MCF 10A (cell line): ENCODE measurements at regions of chr1 and their contacts with region 1.

Region 1: DNA sequence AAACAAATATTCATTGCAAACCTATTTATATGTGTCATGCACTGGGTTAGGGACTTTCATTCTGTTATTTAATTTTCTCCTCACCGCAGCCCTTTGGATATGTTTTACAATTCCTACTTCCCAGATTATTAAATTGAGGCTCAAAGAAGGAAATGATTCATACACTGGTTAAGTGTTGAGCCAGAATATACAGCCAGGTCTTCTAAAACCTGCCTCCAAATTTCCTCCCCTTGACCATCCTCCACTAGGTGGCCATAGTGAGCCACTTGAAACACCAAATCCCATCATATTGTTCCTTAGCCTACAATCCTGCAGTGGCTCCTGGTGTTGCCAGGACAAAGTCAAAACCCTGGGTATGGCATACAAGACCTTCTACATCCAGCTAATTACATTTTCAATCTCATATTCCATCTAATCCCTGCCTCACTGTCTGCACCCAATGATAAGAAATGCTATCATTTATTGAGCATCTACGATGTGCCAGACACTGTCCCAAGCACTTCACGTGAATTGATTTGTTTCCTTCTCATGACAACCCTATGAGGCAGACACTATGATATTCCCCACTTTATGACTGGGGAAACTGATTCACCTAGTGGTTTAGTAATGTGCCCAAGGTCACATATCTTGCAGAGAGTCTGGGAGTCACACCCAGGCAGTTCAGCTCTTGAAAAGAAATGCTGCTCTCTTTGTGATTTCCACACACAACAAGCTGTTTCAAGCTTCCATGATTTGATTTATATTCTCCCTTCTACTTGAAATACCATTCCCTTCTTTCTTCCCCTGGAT is 23.6 kb upstream of the KIRREL1 start:
- DNase-seq: peak; percentile 95
- H3K4me3 Mint-ChIP-seq: peak overlapping the region; percentile 55
- H3K27ac Mint-ChIP-seq: peak overlapping the region; percentile 49
- H3K4me1 Mint-ChIP-seq: peaks cover 28% of the 10 kb centered on the region
- H3K27me3 Mint-ChIP-seq: no peaks in the 10 kb centered on the region
- CTCF ChIP-seq: peak; percentile 94

Region 2: GRCh38 chr1:157798211-157798610 is 171.7 kb before region 1 on chr1:
- CTCF ChIA-PET with region 1: no interaction called
- POLR2A ChIA-PET with region 1: no interaction called
- intact Hi-C with region 1: no loop called
- DNase-seq: peak; percentile 56
- H3K4me3 Mint-ChIP-seq: no peak overlapping the region
- H3K27ac Mint-ChIP-seq: no peak overlapping the region
- H3K4me1 Mint-ChIP-seq: peaks cover 5% of the 10 kb centered on the region
- H3K27me3 Mint-ChIP-seq: peaks cover 51% of the 10 kb centered on the region
- CTCF ChIP-seq: no peak

Region 3: DNA sequence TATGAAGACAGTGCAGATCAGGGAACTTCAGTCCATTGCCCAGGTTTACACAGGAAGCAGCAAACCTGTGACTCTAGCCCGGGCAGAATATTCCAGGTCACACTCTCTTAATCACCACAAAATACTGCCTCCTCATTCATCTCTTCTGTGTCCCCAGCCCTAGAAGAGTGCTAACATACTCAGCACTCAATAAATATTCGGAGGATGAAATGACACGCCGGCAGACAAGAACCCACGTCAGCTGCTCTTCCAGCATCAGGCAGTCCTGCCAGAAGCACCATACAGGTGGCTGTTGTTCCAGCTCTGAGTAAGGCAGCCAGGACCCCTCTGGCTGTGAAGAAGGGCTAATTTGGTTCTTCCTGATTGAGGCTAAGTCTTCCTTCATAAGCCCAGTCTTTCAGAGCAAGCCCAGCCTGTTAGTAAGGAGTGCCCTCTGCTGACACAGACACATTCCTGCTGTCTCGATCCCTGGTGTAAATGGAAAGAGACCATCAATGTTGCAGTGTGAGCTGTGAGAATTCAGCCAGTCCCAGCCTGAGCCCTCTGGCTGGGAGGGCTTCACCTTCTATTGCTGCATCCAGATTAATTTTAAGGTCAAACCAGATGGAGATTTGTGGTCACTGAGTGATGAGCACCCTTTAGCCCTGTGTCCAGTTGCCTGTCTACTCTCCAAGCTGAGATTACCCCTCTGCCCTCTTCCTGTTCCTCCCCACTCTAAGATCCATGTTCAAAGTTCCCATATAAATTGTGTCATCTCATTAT is 21.4 kb before region 1 on chr1:
- CTCF ChIA-PET with region 1: interaction called, 12 read pairs
- POLR2A ChIA-PET with region 1: no interaction called
- intact Hi-C with region 1: no loop called
- DNase-seq: peak; percentile 65
- H3K4me3 Mint-ChIP-seq: no peak overlapping the region
- H3K27ac Mint-ChIP-seq: no peak overlapping the region
- H3K4me1 Mint-ChIP-seq: no peaks in the 10 kb centered on the region
- H3K27me3 Mint-ChIP-seq: peaks cover 84% of the 10 kb centered on the region
- CTCF ChIP-seq: peak; percentile 88

Region 4: GRCh38 chr1:158028969-158029368 is 59.1 kb after region 1 on chr1:
- CTCF ChIA-PET with region 1: interaction called, 56 read pairs
- POLR2A ChIA-PET with region 1: interaction called, 11 read pairs
- intact Hi-C with region 1: no loop called
- DNase-seq: peak; percentile 72
- H3K4me3 Mint-ChIP-seq: no peak overlapping the region
- H3K27ac Mint-ChIP-seq: peak overlapping the region; percentile 63
- H3K4me1 Mint-ChIP-seq: peaks cover 42% of the 10 kb centered on the region
- H3K27me3 Mint-ChIP-seq: no peaks in the 10 kb centered on the region
- CTCF ChIP-seq: no peak

Region 5: GRCh38 chr1:158075078-158075477 is 105.2 kb after region 1 on chr1:
- CTCF ChIA-PET with region 1: interaction called, 19 read pairs
- POLR2A ChIA-PET with region 1: no interaction called
- intact Hi-C with region 1: no loop called
- DNase-seq: no peak
- H3K4me3 Mint-ChIP-seq: no peak overlapping the region
- H3K27ac Mint-ChIP-seq: peak overlapping the region; percentile 1
- H3K4me1 Mint-ChIP-seq: peaks cover 16% of the 10 kb centered on the region
- H3K27me3 Mint-ChIP-seq: no peaks in the 10 kb centered on the region
- CTCF ChIP-seq: no peak

Region 6: GRCh38 chr1:158095737-158096335 is 125.9 kb after region 1 on chr1:
- CTCF ChIA-PET with region 1: interaction called, 56 read pairs
- POLR2A ChIA-PET with region 1: no interaction called
- intact Hi-C with region 1: no loop called
- DNase-seq: peak; percentile 56
- H3K4me3 Mint-ChIP-seq: no peak overlapping the region
- H3K27ac Mint-ChIP-seq: peak overlapping the region; percentile 10
- H3K4me1 Mint-ChIP-seq: peaks cover 9% of the 10 kb centered on the region
- H3K27me3 Mint-ChIP-seq: no peaks in the 10 kb centered on the region
- CTCF ChIP-seq: peak; percentile 67

Region 7: GRCh38 chr1:158145173-158145719 is 175.4 kb after region 1 on chr1:
- CTCF ChIA-PET with region 1: interaction called, 12 read pairs
- POLR2A ChIA-PET with region 1: interaction called, 3 read pairs
- intact Hi-C with region 1: no loop called
- DNase-seq: peak; percentile 98
- H3K4me3 Mint-ChIP-seq: no peak overlapping the region
- H3K27ac Mint-ChIP-seq: peak overlapping the region; percentile 21
- H3K4me1 Mint-ChIP-seq: peaks cover 44% of the 10 kb centered on the region
- H3K27me3 Mint-ChIP-seq: no peaks in the 10 kb centered on the region
- CTCF ChIP-seq: no peak

Region 8: GRCh38 chr1:159071970-159072582 is 1102.2 kb after region 1 on chr1:
- CTCF ChIA-PET with region 1: interaction called, 4 read pairs
- POLR2A ChIA-PET with region 1: no interaction called
- intact Hi-C with region 1: loop called (anchors 2 kb)
- DNase-seq: peak; percentile 78
- H3K4me3 Mint-ChIP-seq: no peak overlapping the region
- H3K27ac Mint-ChIP-seq: no peak overlapping the region
- H3K4me1 Mint-ChIP-seq: no peaks in the 10 kb centered on the region
- H3K27me3 Mint-ChIP-seq: no peaks in the 10 kb centered on the region
- CTCF ChIP-seq: peak; percentile 91